CD4-positive, alpha-beta T cell (primary cell): ENCODE measurements at regions of chr19 and their contacts with region 1.

Region 1: GRCh38 chr19:45792470-45793177 is at the start of gene DMWD:
- DNase-seq: peak; percentile 98 to 100 (median 99)
- ATAC-seq: peak; percentile 92
- H3K4me3 ChIP-seq: peak within 1 kb of the TSS; percentile 55
- H3K4me3 Mint-ChIP-seq: peak within 1 kb of the TSS; percentile 92
- H3K27ac ChIP-seq: no peak within 1 kb of the TSS
- H3K27ac Mint-ChIP-seq: peak within 1 kb of the TSS; percentile 81
- H3K4me1 ChIP-seq: peaks cover 30% of the 10 kb centered on the region
- H3K4me1 Mint-ChIP-seq: peaks cover 52% of the 10 kb centered on the region
- H3K27me3 ChIP-seq: peaks cover 16 to 23% of the 10 kb centered on the region in 2 experiments
- H3K27me3 Mint-ChIP-seq: peaks cover 32% of the 10 kb centered on the region
- CTCF ChIP-seq: no peak
- total RNA-seq, gene DMWD: 28.6 to 31.5 TPM

Region 2: GRCh38 chr19:45862564-45863334 is 70.1 kb after region 1 on chr19 and contains the start of gene SYMPK:
- CTCF ChIA-PET with region 1: no interaction called
- POLR2A ChIA-PET with region 1: no interaction called
- intact Hi-C with region 1: loop called in 1 of 2 experiments (anchors 2 kb)
- DNase-seq: peak; percentile 96 to 99 (median 98)
- ATAC-seq: peak; percentile 97
- H3K4me3 ChIP-seq: peak within 1 kb of the TSS; percentile 80
- H3K4me3 Mint-ChIP-seq: peak within 1 kb of the TSS; percentile 99
- H3K27ac ChIP-seq: peak within 1 kb of the TSS; percentile 66 to 86
- H3K27ac Mint-ChIP-seq: peak within 1 kb of the TSS; percentile 83
- H3K4me1 ChIP-seq: peaks cover 29% of the 10 kb centered on the region
- H3K4me1 Mint-ChIP-seq: peaks cover 34% of the 10 kb centered on the region
- H3K27me3 ChIP-seq: peaks cover 9 to 13% of the 10 kb centered on the region in 2 experiments
- H3K27me3 Mint-ChIP-seq: peaks cover 29% of the 10 kb centered on the region
- CTCF ChIP-seq: no peak
- total RNA-seq, gene SYMPK: 63.3 to 65.0 TPM